A549 (cell line): ENCODE measurements at regions of chr2 and their contacts with region 1.

Region 1: GRCh38 chr2:64330281-64331113 is 123.5 kb upstream of the LGALSL start:
- DNase-seq: peak in 1 of 2 experiments; percentile 88
- ATAC-seq: peak; percentile 64 to 87; a peak in 5 of 6 replicates
- H3K4me3 ChIP-seq: no peak overlapping the region
- H3K27ac ChIP-seq: no peak overlapping the region; a peak in 1 of 6 replicates
- H3K4me1 ChIP-seq: peaks cover 12% of the 10 kb centered on the region
- CTCF ChIP-seq: peak; percentile 98
- EP300 ChIP-seq: no peak
- POLR2A ChIP-seq: no peak
- RAD21 ChIP-seq: peak; percentile 99

Region 2: DNA sequence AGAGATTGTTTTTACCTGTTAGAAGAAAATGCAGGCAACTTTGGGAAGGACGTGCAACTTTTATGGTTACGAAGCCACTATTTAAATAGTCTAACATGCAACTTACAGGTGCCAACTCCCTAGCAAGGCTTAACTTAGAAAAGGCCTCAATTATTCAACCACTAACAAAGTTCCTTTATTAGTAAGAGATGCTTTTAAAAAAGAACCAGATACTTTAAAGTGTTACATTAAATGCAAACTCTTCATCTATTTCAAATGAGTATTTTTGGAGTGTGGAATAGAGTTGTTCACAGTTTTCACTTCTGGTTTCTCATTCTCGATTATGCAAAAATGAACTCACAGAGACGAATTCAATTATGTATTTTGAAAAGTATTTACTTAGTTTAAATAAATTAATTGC is 238.0 kb before region 1 on chr2:
- CTCF ChIA-PET with region 1: no interaction called
- POLR2A ChIA-PET with region 1: no interaction called
- DNase-seq: no peak
- ATAC-seq: no peak
- H3K4me3 ChIP-seq: no peak overlapping the region
- H3K27ac ChIP-seq: no peak overlapping the region
- H3K4me1 ChIP-seq: no peaks in the 10 kb centered on the region
- CTCF ChIP-seq: no peak
- EP300 ChIP-seq: no peak
- POLR2A ChIP-seq: no peak
- RAD21 ChIP-seq: no peak

Region 3: GRCh38 chr2:64354857-64355680 is 24.6 kb after region 1 on chr2:
- CTCF ChIA-PET with region 1: interaction called, 192 read pairs
- POLR2A ChIA-PET with region 1: no interaction called
- DNase-seq: peak; percentile 70 to 86
- ATAC-seq: peak; percentile 58 to 72; a peak in 4 of 6 replicates
- H3K4me3 ChIP-seq: no peak overlapping the region
- H3K27ac ChIP-seq: 0 out of 6 replicates have a peak overlapping the region, but pooled peaks of 1 of the 2 experiments have one; percentile 0
- H3K4me1 ChIP-seq: peaks cover 17% of the 10 kb centered on the region
- CTCF ChIP-seq: no peak
- EP300 ChIP-seq: no peak
- POLR2A ChIP-seq: no peak
- RAD21 ChIP-seq: no peak

Region 4: DNA sequence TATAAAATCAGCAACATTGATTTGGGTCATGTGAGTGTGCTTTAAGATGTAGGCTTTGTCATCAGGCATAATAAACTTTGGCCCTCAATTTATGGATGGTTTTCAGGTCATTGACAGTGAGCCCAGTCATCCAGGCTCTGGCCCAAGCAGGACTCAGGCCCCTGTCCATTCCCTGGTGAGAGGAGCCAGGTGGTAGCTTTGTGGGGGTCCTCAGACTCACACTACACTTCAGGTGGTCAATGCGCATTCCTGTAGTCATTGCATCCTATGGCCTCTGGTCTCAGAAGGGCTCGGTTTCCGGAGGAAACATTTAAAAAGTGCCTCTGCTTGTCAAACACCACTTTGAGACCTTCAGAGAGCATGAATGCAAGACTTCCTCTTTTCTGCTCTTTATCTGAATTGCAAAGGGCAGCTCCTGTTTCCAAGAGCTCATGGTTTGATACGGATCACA is 143.6 kb after region 1 on chr2:
- CTCF ChIA-PET with region 1: interaction called, 533 read pairs
- POLR2A ChIA-PET with region 1: no interaction called
- DNase-seq: no peak
- ATAC-seq: no peak
- H3K4me3 ChIP-seq: no peak overlapping the region
- H3K27ac ChIP-seq: no peak overlapping the region
- H3K4me1 ChIP-seq: no peaks in the 10 kb centered on the region
- CTCF ChIP-seq: no peak
- EP300 ChIP-seq: no peak
- POLR2A ChIP-seq: no peak
- RAD21 ChIP-seq: no peak

Region 5: DNA sequence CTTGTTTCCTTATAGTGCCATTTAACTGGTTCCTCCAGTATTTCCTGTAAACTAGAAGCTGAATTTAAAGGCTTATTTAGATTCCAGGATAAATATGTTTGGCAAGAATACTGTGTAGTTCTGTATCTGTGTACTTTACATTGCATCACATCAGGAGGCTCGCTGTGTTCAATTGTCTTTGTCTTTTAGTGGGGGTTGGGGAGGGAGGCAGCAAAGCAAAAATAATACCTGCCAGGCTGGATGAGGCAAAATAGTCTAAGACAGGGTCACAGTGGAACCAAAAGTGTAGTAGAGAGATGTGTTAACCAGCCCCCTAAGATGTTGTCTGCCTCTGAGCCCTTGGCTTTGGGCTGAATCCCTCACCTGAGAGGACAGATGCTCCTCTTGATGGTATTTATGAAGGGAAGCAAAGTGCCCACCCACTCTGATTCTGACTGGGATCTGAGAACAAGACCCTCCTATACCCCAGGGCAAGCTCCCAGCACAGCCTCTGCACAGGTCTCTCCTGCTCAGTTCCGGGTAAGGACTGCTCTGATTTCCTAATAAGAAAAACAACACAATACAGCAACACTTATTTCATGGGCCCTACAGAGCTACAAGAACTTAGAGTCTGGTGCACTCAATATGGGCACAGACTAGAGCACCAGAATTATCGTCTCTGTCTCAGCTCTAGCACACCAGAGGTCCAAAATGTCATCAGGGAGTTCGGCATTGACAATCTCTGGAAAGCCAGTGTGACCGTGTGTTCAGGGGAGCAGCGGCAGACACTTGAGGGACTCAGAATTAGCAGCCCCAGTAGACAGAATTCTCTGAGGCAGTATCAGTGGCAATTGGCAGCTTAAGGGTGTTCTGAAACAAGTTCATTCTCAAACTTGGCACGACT is 186.4 kb after region 1 on chr2:
- CTCF ChIA-PET with region 1: interaction called, 32 read pairs
- POLR2A ChIA-PET with region 1: no interaction called
- DNase-seq: no peak
- ATAC-seq: peak; percentile 49 to 58; a peak in 4 of 6 replicates
- H3K4me3 ChIP-seq: no peak overlapping the region
- H3K27ac ChIP-seq: peak overlapping the region in 1 of 2 experiments; percentile 17; a peak in 1 of 6 replicates
- H3K4me1 ChIP-seq: peaks cover 5% of the 10 kb centered on the region; the same call in 1 of the 3 replicates
- CTCF ChIP-seq: no peak
- EP300 ChIP-seq: no peak
- POLR2A ChIP-seq: no peak
- RAD21 ChIP-seq: no peak

Region 6: GRCh38 chr2:64562148-64562784 is 231.8 kb after region 1 on chr2:
- CTCF ChIA-PET with region 1: interaction called, 45 read pairs
- POLR2A ChIA-PET with region 1: no interaction called
- DNase-seq: peak; percentile 6 to 41
- ATAC-seq: peak; percentile 73 to 85; a peak in 5 of 6 replicates
- H3K4me3 ChIP-seq: no peak overlapping the region
- H3K27ac ChIP-seq: no peak overlapping the region
- H3K4me1 ChIP-seq: 0 out of 3 replicates have a peak, but pooled peaks cover 3% of the 10 kb centered on the region
- CTCF ChIP-seq: peak; percentile 72
- EP300 ChIP-seq: no peak
- POLR2A ChIP-seq: no peak
- RAD21 ChIP-seq: peak; percentile 77 to 80

Region 7: GRCh38 chr2:64888591-64889309 is 558.3 kb after region 1 on chr2:
- CTCF ChIA-PET with region 1: interaction called, 72 read pairs
- POLR2A ChIA-PET with region 1: no interaction called
- DNase-seq: peak; percentile 83 to 85
- ATAC-seq: peak; percentile 94 to 97
- H3K4me3 ChIP-seq: no peak overlapping the region
- H3K27ac ChIP-seq: no peak overlapping the region
- H3K4me1 ChIP-seq: 0 out of 3 replicates have a peak, but pooled peaks cover 3% of the 10 kb centered on the region
- CTCF ChIP-seq: peak; percentile 80
- EP300 ChIP-seq: no peak
- POLR2A ChIP-seq: no peak
- RAD21 ChIP-seq: peak; percentile 90 to 91

Region 8: DNA sequence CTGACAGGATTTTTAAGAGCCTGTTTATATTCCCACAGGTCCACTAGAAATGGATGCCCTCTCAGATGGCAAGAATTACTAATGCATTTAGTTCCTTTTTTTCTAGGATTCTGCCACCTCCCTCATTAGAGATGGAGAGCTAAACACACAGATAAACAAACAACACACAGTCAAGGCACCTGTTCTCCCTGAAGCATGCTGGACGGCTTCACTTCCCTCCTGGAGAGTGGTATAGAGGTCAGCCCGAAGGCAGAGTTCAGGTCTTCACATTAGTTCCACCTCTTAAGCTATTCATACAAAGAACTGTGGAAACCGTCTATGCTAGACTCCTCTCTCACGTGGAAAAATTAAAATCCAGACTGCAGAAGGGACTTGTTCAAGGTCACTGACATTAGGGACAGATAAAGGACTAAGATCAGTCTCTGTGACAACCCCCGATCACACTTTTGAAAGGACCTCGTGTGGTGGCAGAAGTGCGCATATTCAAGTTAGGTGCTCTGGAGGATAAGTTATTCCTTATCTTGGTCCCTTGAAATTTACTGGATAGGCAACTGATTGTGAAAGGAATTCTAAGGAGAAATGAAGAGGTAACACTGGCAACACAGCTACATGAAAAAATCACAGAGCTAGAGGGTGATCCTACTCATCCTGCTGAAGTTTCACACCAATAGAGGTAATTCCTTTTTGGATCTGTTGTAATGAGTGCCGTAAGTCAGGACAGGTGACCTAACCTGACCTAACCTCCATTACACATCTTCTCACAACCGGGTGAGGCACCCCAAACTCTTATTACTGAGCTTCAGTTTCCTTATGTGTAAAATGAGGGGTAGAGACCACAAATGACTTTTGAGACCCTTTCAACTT is 1026.8 kb after region 1 on chr2:
- CTCF ChIA-PET with region 1: no interaction called
- POLR2A ChIA-PET with region 1: no interaction called
- DNase-seq: no peak
- ATAC-seq: no peak
- H3K4me3 ChIP-seq: no peak overlapping the region
- H3K27ac ChIP-seq: no peak overlapping the region
- H3K4me1 ChIP-seq: peaks cover 13% of the 10 kb centered on the region; the same call in 2 of the 3 replicates
- CTCF ChIP-seq: no peak
- EP300 ChIP-seq: no peak
- POLR2A ChIP-seq: no peak
- RAD21 ChIP-seq: no peak